Vagina (tissue), 2 donors: ENCODE measurements at regions of chr17 and their contacts with region 1.

Region 1: GRCh38 chr17:34154961-34155730 is 99.9 kb upstream of the CCL2 start:
- DNase-seq: no peak
- H3K4me3 ChIP-seq: no peak overlapping the region
- H3K27ac ChIP-seq: no peak overlapping the region
- H3K4me1 ChIP-seq: no peaks in the 10 kb centered on the region
- H3K27me3 ChIP-seq: peaks cover 4% of the 10 kb centered on the region
- CTCF ChIP-seq: no peak
- POLR2A ChIP-seq: no peak

Region 2: DNA sequence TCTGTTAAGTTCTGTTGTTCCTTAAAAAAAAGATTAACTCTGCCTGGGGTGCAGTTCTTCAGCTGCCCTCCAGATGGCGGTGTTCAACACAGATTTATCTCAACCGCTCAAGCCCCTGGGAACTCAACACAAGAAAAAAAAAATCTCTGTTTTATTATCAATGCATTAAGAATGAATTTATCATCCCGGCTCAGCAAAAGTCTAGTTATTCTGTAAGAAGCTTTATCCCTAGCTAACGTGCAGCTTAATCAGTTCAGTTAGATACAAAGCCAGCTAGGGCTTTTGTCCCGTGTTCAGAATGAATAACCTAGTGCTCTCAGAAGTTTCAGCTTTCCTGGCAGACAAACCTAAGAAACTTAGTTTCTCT is 375.9 kb before region 1 on chr17:
- intact Hi-C with region 1: loop called (anchors 5 kb)
- DNase-seq: no peak
- H3K4me3 ChIP-seq: no peak overlapping the region
- H3K27ac ChIP-seq: no peak overlapping the region
- H3K4me1 ChIP-seq: no peaks in the 10 kb centered on the region
- H3K27me3 ChIP-seq: no peaks in the 10 kb centered on the region
- CTCF ChIP-seq: peak; percentile 70 to 88 (median 86)
- POLR2A ChIP-seq: no peak